HCT116 (cell line): ENCODE measurements at regions of chr12 and their contacts with region 1.

Region 1: DNA sequence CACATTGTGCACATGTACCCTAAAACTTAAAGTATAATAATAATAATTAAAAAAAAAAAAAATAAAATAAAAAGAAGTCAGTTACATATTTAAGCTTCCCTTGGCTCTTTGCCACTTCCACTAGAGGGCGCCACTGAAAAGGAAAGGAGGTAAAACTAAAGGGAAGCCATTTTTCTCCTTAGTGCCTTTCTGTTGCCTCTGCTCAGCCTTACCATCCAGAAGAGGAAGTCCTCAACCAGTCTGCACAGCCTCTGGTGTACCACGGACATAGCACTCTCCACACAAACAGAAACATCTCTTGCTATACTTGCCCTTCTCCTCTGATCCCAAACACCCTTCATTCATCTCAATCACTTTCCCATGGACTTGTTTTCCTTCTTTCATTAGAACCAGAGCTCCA is 169.0 kb upstream of the EEA1 start:
- DNase-seq: peak; percentile 63
- ATAC-seq: peak; percentile 40; the same call in 1 of the 2 replicates
- H3K4me3 ChIP-seq: no peak overlapping the region
- H3K27ac ChIP-seq: no peak overlapping the region
- H3K4me1 ChIP-seq: no peaks in the 10 kb centered on the region
- H3K27me3 ChIP-seq: no peaks in the 10 kb centered on the region
- CTCF ChIP-seq: peak; percentile 29 to 59 (median 50); a peak in 5 of 6 replicates
- POLR2A ChIP-seq: no peak
- RAD21 ChIP-seq: peak; percentile 54

Region 2: GRCh38 chr12:91753649-91754048 is 1344.4 kb before region 1 on chr12:
- CTCF ChIA-PET with region 1: no interaction called
- POLR2A ChIA-PET with region 1: no interaction called
- RAD21 ChIA-PET with region 1: no interaction called
- intact Hi-C with region 1: no loop called
- DNase-seq: no peak
- ATAC-seq: no peak
- H3K4me3 ChIP-seq: no peak overlapping the region
- H3K27ac ChIP-seq: no peak overlapping the region
- H3K4me1 ChIP-seq: no peaks in the 10 kb centered on the region
- H3K27me3 ChIP-seq: no peaks in the 10 kb centered on the region
- CTCF ChIP-seq: no peak
- POLR2A ChIP-seq: no peak
- RAD21 ChIP-seq: no peak

Region 3: GRCh38 chr12:92827836-92828431 is 270.1 kb before region 1 on chr12:
- CTCF ChIA-PET with region 1: no interaction called
- POLR2A ChIA-PET with region 1: no interaction called
- RAD21 ChIA-PET with region 1: no interaction called
- intact Hi-C with region 1: loop called (anchors 5 kb)
- DNase-seq: peak; percentile 28
- ATAC-seq: peak; percentile 70
- H3K4me3 ChIP-seq: no peak overlapping the region
- H3K27ac ChIP-seq: no peak overlapping the region
- H3K4me1 ChIP-seq: no peaks in the 10 kb centered on the region
- H3K27me3 ChIP-seq: no peaks in the 10 kb centered on the region
- CTCF ChIP-seq: peak; percentile 77 to 91 (median 87); a peak in 5 of 6 replicates
- POLR2A ChIP-seq: no peak
- RAD21 ChIP-seq: peak; percentile 72

Region 4: DNA sequence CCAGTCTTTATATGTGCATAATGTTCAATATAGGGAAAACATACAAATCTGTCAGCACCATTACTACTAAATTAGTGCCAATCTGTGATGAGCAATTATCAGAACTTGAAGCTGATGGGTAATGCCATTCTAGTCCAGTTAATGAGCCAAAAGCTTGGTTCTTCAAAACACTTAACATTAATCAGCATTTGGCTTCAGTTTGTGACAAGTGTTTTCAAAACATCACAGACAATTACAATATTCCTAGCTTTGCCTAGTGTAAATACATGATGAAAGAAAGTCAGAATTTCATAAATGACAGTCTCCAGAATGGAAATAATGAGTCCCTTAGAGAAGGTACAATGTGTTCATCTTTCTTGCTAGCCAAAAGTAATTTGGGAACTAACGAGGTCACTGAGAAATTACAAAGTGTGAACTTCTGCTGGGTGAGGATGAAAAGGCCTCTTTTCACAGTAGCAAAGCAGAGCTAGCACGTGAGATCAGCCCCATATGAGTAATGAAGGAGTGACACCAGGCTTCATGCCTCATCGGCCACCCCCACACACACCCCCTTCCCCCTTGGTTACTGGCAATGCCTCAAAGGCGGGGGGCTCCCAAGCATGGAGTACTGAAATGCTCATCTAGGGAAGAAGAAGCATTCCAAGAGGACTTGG is 11.6 kb after region 1 on chr12:
- CTCF ChIA-PET with region 1: interaction called, 10 read pairs
- POLR2A ChIA-PET with region 1: no interaction called
- RAD21 ChIA-PET with region 1: no interaction called
- intact Hi-C with region 1: no loop called
- DNase-seq: no peak
- ATAC-seq: no peak
- H3K4me3 ChIP-seq: no peak overlapping the region
- H3K27ac ChIP-seq: no peak overlapping the region
- H3K4me1 ChIP-seq: no peaks in the 10 kb centered on the region
- H3K27me3 ChIP-seq: no peaks in the 10 kb centered on the region
- CTCF ChIP-seq: no peak
- POLR2A ChIP-seq: no peak
- RAD21 ChIP-seq: no peak

Region 5: DNA sequence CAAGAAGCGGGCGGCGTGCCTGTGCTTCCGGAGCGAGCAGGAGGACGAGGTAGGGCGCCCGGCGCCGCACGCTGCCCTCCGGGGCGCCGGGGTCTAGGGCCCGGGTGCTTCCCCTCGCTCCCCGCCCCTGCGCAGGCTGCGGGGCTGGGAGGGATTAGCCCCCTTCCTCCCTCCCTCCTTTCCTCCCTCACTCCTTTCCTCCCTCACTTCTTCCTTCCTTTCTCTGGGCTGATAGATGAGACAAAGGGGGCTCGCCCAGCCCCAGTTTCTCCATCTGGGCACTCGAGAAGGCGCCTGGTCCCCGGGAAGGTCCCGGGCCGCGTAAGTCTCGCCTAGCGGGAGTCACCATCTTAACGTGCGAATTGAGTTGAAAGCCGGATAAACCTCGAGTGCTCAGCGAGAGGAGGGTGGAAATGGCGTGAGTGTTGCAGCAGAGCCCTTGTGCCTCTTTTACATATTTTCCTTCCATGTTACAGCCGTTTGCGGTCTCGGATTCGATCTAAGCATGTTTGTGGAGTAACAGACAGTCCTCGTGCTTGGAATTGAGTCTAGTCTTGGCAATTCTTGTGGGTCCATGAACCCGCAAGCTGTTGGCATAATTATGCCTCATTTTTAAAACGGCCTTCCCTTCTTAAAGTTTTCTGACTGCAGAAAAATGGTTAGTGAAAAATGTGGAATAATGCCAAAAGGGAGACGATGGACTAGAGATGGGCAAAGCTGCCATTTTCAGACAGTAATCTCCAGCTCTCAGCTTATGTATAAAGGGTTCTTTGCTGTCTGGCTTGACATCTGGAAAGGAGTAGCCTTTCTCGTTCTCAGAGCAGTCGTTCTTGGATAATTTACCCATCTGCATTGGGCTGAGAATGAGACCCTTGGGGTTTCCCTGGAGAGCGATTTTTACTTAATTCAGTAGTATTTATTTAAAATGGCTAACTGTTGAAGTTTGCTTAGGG is 280.6 kb after region 1 on chr12:
- CTCF ChIA-PET with region 1: no interaction called
- POLR2A ChIA-PET with region 1: no interaction called
- RAD21 ChIA-PET with region 1: no interaction called
- intact Hi-C with region 1: loop called (anchors 5 kb)
- DNase-seq: no peak
- ATAC-seq: peak; percentile 26
- H3K4me3 ChIP-seq: peak overlapping the region; percentile 86 to 88
- H3K27ac ChIP-seq: peak overlapping the region; percentile 68
- H3K4me1 ChIP-seq: peaks cover 17 to 32% of the 10 kb centered on the region in 2 experiments
- H3K27me3 ChIP-seq: no peaks in the 10 kb centered on the region
- CTCF ChIP-seq: no peak
- POLR2A ChIP-seq: no peak
- RAD21 ChIP-seq: no peak